AG04450 (cell line): ENCODE measurements at regions of chr2 and their contacts with region 1.

Region 1: DNA sequence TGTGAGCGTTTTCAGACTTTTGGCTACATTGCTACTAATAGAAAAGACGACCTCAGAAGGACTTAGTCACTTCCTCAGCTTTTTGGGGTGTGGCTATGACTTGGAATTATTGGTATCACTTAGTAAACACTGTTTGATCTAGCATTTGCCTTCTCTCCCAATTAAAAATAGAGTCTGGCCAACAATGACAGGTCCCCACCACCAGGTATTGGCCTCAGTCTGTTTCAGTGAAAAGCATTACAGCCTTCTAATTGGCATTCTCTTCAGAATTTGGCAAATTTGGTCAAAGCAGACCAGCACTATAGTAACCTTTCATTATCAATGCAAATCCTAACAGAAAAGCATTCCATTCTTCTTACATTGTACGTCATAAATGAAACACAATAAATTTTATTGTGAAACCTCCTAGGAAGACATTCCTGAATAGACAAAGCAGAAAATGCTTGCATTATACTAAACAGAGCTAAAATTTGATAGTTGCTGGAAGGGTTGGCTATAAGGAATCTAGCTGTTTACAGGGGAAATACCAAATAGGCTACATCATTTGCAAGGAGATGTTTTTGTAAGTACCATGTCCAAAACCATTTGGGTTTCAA is 613.9 kb downstream of the IRS1 start:
- DNase-seq: peak; percentile 93
- H3K4me3 ChIP-seq: no peak overlapping the region; the same call in 1 of the 2 replicates
- H3K27ac ChIP-seq: peak overlapping the region; percentile 95
- H3K27me3 ChIP-seq: no peaks in the 10 kb centered on the region
- CTCF ChIP-seq: no peak

Region 2: DNA sequence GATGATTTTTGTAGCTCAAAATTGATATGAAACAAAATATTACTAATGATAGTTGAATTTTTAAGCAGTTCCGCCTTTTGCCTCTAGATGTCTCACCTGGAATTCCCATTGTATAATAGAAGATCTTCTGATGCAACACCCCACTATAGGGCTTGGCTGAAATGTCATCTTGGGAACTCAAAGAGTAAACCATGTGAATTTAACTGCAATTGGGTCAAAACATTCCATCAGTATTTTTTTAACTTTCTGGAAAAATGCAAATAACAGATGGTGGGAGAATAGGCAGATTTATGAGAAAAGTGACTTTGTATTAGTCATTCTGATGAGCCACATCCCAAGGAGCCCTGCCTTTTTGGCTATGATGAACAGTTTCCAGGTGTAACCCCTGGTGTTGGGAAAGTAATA is 296.3 kb before region 1 on chr2:
- CTCF ChIA-PET with region 1: interaction called, 14 read pairs
- POLR2A ChIA-PET with region 1: no interaction called
- DNase-seq: peak; percentile 74
- H3K4me3 ChIP-seq: no peak overlapping the region
- H3K27ac ChIP-seq: no peak overlapping the region
- H3K27me3 ChIP-seq: no peaks in the 10 kb centered on the region
- CTCF ChIP-seq: peak; percentile 85

Region 3: GRCh38 chr2:226118471-226119430 is 67.0 kb before region 1 on chr2:
- CTCF ChIA-PET with region 1: no interaction called
- POLR2A ChIA-PET with region 1: interaction called, 22 read pairs
- DNase-seq: peak; percentile 68
- H3K4me3 ChIP-seq: peak overlapping the region; percentile 33
- H3K27ac ChIP-seq: peak overlapping the region; percentile 78
- H3K27me3 ChIP-seq: no peaks in the 10 kb centered on the region
- CTCF ChIP-seq: no peak

Region 4: DNA sequence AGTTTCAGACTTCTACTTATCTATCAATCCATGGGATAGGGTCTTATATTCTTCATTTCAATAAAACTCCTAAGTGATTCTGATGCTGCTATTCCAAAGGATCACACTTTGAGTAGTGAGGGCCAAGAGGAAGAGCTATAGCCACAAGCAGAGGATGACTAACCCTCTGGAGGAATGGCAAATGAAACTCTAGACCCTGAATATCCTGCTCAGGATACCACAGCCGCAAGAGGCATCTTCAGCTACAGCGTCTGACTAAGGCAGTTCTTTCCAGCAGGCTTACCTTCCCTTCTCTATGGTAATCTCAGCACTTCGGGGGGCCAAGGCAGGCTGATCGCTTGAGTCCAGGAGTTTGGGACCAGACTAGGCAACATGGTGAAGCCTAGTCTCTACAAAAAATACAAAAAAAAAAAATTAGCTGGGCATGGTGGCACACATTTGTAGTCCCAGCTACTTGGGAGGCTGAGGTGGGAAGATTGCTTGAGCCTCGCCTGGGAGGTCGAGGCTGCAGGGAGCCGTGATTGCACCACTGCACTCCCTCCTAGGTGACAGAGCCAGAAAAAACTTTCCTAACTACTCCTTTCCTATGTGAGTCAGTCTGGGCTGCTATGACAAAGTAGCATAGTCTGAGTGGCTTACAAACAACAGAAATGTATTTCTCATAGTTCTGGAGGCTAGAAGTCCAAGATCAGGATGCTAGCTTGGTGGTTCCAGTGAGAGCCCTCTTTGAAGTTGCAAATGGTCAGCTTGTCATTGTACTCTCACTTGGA is 242.0 kb after region 1 on chr2:
- CTCF ChIA-PET with region 1: no interaction called
- POLR2A ChIA-PET with region 1: interaction called, 20 read pairs
- DNase-seq: peak; percentile 86
- H3K4me3 ChIP-seq: peak overlapping the region; percentile 14
- H3K27ac ChIP-seq: peak overlapping the region; percentile 93
- H3K27me3 ChIP-seq: no peaks in the 10 kb centered on the region
- CTCF ChIP-seq: peak; percentile 35

Region 5: GRCh38 chr2:226478109-226478809 is 292.5 kb after region 1 on chr2:
- CTCF ChIA-PET with region 1: interaction called, 3 read pairs
- POLR2A ChIA-PET with region 1: interaction called, 13 read pairs
- DNase-seq: peak; percentile 82
- H3K4me3 ChIP-seq: no peak overlapping the region
- H3K27ac ChIP-seq: peak overlapping the region; percentile 93
- H3K27me3 ChIP-seq: no peaks in the 10 kb centered on the region
- CTCF ChIP-seq: no peak